H1 (cell line): ENCODE measurements at regions of chr10 and their contacts with region 1.

Region 1: GRCh38 chr10:93376372-93377293 is 105.5 kb downstream of the MYOF start:
- DNase-seq: no peak
- H3K4me3 ChIP-seq: no peak overlapping the region
- H3K27ac ChIP-seq: no peak overlapping the region
- H3K4me1 ChIP-seq: 0 out of 7 replicates have a peak, but pooled peaks cover 0 to 3% (median 0%) of the 10 kb centered on the region in 4 experiments
- H3K27me3 ChIP-seq: no peaks in the 10 kb centered on the region; a peak in 1 of 7 replicates
- CTCF ChIP-seq: peak in 2 of 3 experiments; percentile 91 to 93; a peak in 3 of 4 replicates
- EP300 ChIP-seq: no peak
- POLR2A ChIP-seq: no peak
- RAD21 ChIP-seq: peak; percentile 98 to 99

Region 2: GRCh38 chr10:93386631-93387369 is 10.2 kb after region 1 on chr10:
- CTCF ChIA-PET with region 1: interaction called, 81 read pairs
- POLR2A ChIA-PET with region 1: interaction called, 6 read pairs
- DNase-seq: no peak
- H3K4me3 ChIP-seq: no peak overlapping the region
- H3K27ac ChIP-seq: no peak overlapping the region
- H3K4me1 ChIP-seq: no peaks in the 10 kb centered on the region; a peak in 1 of 7 replicates
- H3K27me3 ChIP-seq: no peaks in the 10 kb centered on the region
- CTCF ChIP-seq: peak in 1 of 3 experiments; percentile 4; a peak in 1 of 4 replicates
- EP300 ChIP-seq: no peak
- POLR2A ChIP-seq: no peak
- RAD21 ChIP-seq: no peak; a peak in 1 of 4 replicates

Region 3: GRCh38 chr10:93420091-93420490 is 43.5 kb after region 1 on chr10:
- CTCF ChIA-PET with region 1: interaction called, 20 read pairs
- POLR2A ChIA-PET with region 1: no interaction called
- DNase-seq: no peak
- H3K4me3 ChIP-seq: no peak overlapping the region
- H3K27ac ChIP-seq: no peak overlapping the region
- H3K4me1 ChIP-seq: peaks cover 2 to 8% (median 5%) of the 10 kb centered on the region in 4 experiments; a peak in 6 of 7 replicates
- H3K27me3 ChIP-seq: no peaks in the 10 kb centered on the region
- CTCF ChIP-seq: no peak
- EP300 ChIP-seq: no peak
- POLR2A ChIP-seq: no peak
- RAD21 ChIP-seq: no peak

Region 4: GRCh38 chr10:93463678-93464476 is 87.2 kb after region 1 on chr10:
- CTCF ChIA-PET with region 1: interaction called, 63 read pairs
- POLR2A ChIA-PET with region 1: no interaction called
- DNase-seq: no peak
- H3K4me3 ChIP-seq: no peak overlapping the region
- H3K27ac ChIP-seq: no peak overlapping the region
- H3K4me1 ChIP-seq: peaks cover 0 to 2% (median under 1%) of the 10 kb centered on the region in 4 experiments; a peak in 3 of 7 replicates
- H3K27me3 ChIP-seq: no peaks in the 10 kb centered on the region
- CTCF ChIP-seq: no peak
- EP300 ChIP-seq: no peak
- POLR2A ChIP-seq: no peak
- RAD21 ChIP-seq: no peak

Region 5: GRCh38 chr10:93496322-93497041 is 119.8 kb after region 1 on chr10 and contains the start of gene CEP55:
- CTCF ChIA-PET with region 1: interaction called, 513 read pairs
- POLR2A ChIA-PET with region 1: no interaction called
- DNase-seq: peak; percentile 73 to 95
- H3K4me3 ChIP-seq: peak within 1 kb of the TSS; percentile 73 to 79 (median 77)
- H3K27ac ChIP-seq: no peak within 1 kb of the TSS
- H3K4me1 ChIP-seq: no peaks in the 10 kb centered on the region; a peak in 1 of 7 replicates
- H3K27me3 ChIP-seq: peaks cover 0 to 2% (median 0%) of the 10 kb centered on the region in 4 experiments; a peak in 2 of 7 replicates
- CTCF ChIP-seq: no peak
- EP300 ChIP-seq: no peak
- POLR2A ChIP-seq: peak in 1 of 2 experiments; percentile 77; a peak in 2 of 3 replicates
- RAD21 ChIP-seq: no peak
- total RNA-seq, gene CEP55: 18.9 and 19.6 TPM in 2 replicates

Region 6: GRCh38 chr10:93515071-93516005 is 138.7 kb after region 1 on chr10:
- CTCF ChIA-PET with region 1: interaction called, 105 read pairs
- POLR2A ChIA-PET with region 1: interaction called, 3 read pairs
- DNase-seq: no peak
- H3K4me3 ChIP-seq: no peak overlapping the region
- H3K27ac ChIP-seq: no peak overlapping the region
- H3K4me1 ChIP-seq: no peaks in the 10 kb centered on the region; a peak in 1 of 7 replicates
- H3K27me3 ChIP-seq: no peaks in the 10 kb centered on the region
- CTCF ChIP-seq: no peak
- EP300 ChIP-seq: no peak
- POLR2A ChIP-seq: no peak
- RAD21 ChIP-seq: no peak

Region 7: DNA sequence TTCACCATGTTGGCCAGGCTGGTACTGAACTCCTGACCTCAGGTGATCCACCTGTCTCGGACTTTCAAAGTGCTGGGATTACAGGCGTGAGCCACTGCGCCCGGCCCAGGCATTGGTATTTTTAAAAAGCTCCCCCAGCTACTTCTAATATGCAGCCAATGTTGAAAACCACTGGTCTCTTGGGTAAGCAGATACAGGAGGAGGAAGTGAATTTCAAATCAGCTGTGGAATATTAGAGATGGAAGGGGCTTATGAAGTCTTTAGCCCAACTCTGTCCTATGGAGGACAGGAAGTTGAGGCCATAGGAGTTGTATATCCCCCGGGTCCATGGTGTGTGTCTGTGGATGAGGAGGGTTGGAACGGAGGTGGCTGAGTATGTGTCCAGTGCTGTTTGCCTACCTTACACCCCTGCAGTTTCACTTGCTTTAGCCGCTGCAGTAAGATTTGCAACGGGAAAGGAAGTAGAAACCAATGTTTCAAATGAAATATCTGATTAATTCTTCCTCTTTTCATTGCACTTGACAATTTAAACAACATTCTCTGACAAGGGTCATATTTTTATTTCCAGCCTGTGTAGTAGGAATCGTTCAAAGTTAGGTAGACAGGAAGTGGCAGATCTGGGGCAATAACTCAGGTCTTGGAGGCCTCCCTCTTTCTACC is 239.1 kb after region 1 on chr10:
- CTCF ChIA-PET with region 1: no interaction called
- POLR2A ChIA-PET with region 1: no interaction called
- DNase-seq: no peak
- H3K4me3 ChIP-seq: no peak overlapping the region
- H3K27ac ChIP-seq: no peak overlapping the region
- H3K4me1 ChIP-seq: peaks cover 0 to 4% (median 1%) of the 10 kb centered on the region in 4 experiments; a peak in 1 of 7 replicates
- H3K27me3 ChIP-seq: peaks cover 0 to 2% (median 0%) of the 10 kb centered on the region in 4 experiments; a peak in 1 of 7 replicates
- CTCF ChIP-seq: no peak
- EP300 ChIP-seq: no peak
- POLR2A ChIP-seq: no peak
- RAD21 ChIP-seq: no peak